Testis (tissue), 5 donors: ENCODE measurements at regions of chr5 and their contacts with region 1.

Region 1: DNA sequence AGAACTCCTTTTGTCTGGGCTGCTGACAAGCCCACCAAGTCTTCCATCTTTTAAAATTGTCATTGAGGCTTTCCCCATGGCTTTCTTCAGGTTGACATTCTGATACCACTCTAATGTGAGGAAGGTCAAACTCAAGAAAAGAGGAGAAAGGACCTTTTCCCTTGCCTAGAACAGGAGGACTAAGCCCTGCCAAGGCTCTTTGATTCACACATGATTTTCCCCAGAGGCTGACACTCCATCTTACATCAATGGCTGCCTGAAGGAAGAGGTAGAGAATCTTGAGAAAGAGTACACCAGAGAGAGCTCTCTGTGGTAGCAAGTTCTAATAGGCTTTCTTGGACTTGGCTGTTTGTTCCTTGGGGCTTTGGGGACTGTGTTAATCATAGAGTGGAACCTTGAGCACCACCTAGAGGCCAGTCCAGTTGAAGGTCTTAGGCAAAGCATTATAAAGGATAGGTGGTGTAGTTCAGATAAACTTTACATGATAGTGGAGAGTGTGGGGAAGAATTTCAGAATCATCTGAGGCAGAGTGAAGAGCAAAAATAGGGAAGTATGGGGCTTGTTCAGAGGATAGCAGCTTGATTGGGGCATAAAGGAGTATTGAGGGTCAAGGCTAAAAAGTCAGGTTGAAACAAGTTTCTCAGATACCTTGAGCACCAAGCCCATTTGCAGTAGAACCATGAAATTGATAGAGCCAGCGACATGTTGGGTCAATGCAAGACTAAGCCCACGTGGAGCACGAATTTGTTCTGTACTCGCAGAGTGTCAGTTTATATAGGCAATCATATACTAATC is 36.7 kb downstream of the NDFIP1 start:
- DNase-seq: peak; percentile 84
- H3K4me3 ChIP-seq: no peak overlapping the region
- H3K27ac ChIP-seq: no peak overlapping the region
- H3K4me1 ChIP-seq: no peaks in the 10 kb centered on the region
- H3K27me3 ChIP-seq: no peaks in the 10 kb centered on the region
- CTCF ChIP-seq: peak; percentile 50 to 66 (median 57)
- POLR2A ChIP-seq: no peak

Region 2: DNA sequence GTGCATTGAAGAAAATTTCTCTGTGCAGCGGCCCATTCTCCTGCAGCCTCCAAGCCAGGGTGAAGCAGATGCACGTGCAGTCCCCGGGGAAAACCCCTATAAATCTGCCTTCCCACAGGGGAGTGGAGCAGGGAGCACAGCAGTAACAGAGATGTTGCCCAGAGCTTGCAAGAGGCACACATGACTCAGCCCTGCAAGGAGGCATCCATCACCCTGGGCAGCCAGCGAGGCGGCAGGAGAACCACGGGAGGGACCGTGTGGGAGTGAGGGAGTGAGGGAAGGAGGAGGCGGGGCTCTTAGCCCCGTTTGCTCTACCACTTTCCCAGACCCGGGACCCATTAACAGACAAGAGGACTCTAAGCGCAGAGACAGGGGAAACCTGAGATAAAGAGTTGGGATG is 367.1 kb before region 1 on chr5:
- intact Hi-C with region 1: no loop called
- DNase-seq: peak; percentile 44
- H3K4me3 ChIP-seq: no peak overlapping the region
- H3K27ac ChIP-seq: no peak overlapping the region
- H3K4me1 ChIP-seq: no peaks in the 10 kb centered on the region
- H3K27me3 ChIP-seq: no peaks in the 10 kb centered on the region
- CTCF ChIP-seq: no peak
- POLR2A ChIP-seq: no peak

Region 3: GRCh38 chr5:141992349-141992963 is 152.8 kb before region 1 on chr5:
- intact Hi-C with region 1: loop called (anchors 10 kb)
- DNase-seq: peak; percentile 90
- H3K4me3 ChIP-seq: no peak overlapping the region
- H3K27ac ChIP-seq: no peak overlapping the region
- H3K4me1 ChIP-seq: peaks cover 4% of the 10 kb centered on the region
- H3K27me3 ChIP-seq: no peaks in the 10 kb centered on the region
- CTCF ChIP-seq: peak; percentile 73 to 79 (median 76)
- POLR2A ChIP-seq: no peak